ENCODE measurements at regions of chr16 and their contacts with region 1.

Region 1: GRCh38 chr16:30698139-30698815 is 694 bp upstream of the SRCAP start:
- DNase-seq: peak; percentile 99
- ATAC-seq: peak; percentile 78
- H3K4me3 Mint-ChIP-seq: peak overlapping the region; percentile 97
- H3K27ac Mint-ChIP-seq: peak overlapping the region; percentile 99
- H3K4me1 Mint-ChIP-seq: peaks cover 49% of the 10 kb centered on the region
- H3K27me3 Mint-ChIP-seq: no peaks in the 10 kb centered on the region

Region 2: DNA sequence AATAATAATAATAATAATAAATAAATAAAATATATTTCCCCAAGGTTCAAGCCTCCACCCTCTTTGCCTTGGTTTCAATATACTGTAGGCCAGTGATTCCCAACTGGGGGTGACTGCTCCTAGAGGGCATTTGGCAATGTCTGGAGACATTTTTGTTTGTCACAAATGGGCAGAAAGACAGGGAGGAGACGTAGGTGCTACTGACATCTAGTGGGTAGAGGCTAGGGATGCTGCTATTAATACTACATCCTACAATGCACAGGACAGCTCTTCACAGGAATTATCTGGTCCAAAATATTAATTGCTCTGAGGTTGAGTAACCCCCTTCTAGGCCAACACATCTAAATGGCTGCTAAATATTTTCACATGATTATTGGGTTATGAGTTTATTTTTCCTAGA is 60.3 kb before region 1 on chr16:
- CTCF ChIA-PET with region 1: interaction called, 10 read pairs
- POLR2A ChIA-PET with region 1: no interaction called
- DNase-seq: peak; percentile 58
- ATAC-seq: no peak
- H3K4me3 Mint-ChIP-seq: no peak overlapping the region
- H3K27ac Mint-ChIP-seq: no peak overlapping the region
- H3K4me1 Mint-ChIP-seq: peaks cover 12% of the 10 kb centered on the region
- H3K27me3 Mint-ChIP-seq: peaks cover 4% of the 10 kb centered on the region

Region 3: GRCh38 chr16:30650369-30651123 is 47.7 kb before region 1 on chr16 and contains the start of gene PRR14:
- CTCF ChIA-PET with region 1: interaction called, 26 read pairs
- POLR2A ChIA-PET with region 1: interaction called, 5 read pairs
- DNase-seq: peak; percentile 100
- ATAC-seq: peak; percentile 86
- H3K4me3 Mint-ChIP-seq: peak within 1 kb of the TSS; percentile 91
- H3K27ac Mint-ChIP-seq: peak within 1 kb of the TSS; percentile 95
- H3K4me1 Mint-ChIP-seq: peaks cover 40% of the 10 kb centered on the region
- H3K27me3 Mint-ChIP-seq: peaks cover 1% of the 10 kb centered on the region
- total RNA-seq, gene PRR14: 87.6 to 91.4 TPM

Region 4: GRCh38 chr16:30657866-30658730 is 40.2 kb before region 1 on chr16 and contains the start of gene FBRS:
- CTCF ChIA-PET with region 1: interaction called, 129 read pairs
- POLR2A ChIA-PET with region 1: interaction called, 72 read pairs
- DNase-seq: peak; percentile 100
- ATAC-seq: peak; percentile 77
- H3K4me3 Mint-ChIP-seq: peak within 1 kb of the TSS; percentile 87
- H3K27ac Mint-ChIP-seq: peak within 1 kb of the TSS; percentile 100
- H3K4me1 Mint-ChIP-seq: peaks cover 49% of the 10 kb centered on the region
- H3K27me3 Mint-ChIP-seq: no peaks in the 10 kb centered on the region
- total RNA-seq, gene FBRS: 85.2 to 100 TPM

Measured in activated CD8-positive, alpha-beta T cell treated with anti-CD3 and anti-CD28 coated beads, Interleukin-2, amount 10 ng/mL, durations not matched to agents 7 days and 5 days (primary cell).